B cell (primary cell): ENCODE measurements at regions of chr12 and their contacts with region 1.

Region 1: DNA sequence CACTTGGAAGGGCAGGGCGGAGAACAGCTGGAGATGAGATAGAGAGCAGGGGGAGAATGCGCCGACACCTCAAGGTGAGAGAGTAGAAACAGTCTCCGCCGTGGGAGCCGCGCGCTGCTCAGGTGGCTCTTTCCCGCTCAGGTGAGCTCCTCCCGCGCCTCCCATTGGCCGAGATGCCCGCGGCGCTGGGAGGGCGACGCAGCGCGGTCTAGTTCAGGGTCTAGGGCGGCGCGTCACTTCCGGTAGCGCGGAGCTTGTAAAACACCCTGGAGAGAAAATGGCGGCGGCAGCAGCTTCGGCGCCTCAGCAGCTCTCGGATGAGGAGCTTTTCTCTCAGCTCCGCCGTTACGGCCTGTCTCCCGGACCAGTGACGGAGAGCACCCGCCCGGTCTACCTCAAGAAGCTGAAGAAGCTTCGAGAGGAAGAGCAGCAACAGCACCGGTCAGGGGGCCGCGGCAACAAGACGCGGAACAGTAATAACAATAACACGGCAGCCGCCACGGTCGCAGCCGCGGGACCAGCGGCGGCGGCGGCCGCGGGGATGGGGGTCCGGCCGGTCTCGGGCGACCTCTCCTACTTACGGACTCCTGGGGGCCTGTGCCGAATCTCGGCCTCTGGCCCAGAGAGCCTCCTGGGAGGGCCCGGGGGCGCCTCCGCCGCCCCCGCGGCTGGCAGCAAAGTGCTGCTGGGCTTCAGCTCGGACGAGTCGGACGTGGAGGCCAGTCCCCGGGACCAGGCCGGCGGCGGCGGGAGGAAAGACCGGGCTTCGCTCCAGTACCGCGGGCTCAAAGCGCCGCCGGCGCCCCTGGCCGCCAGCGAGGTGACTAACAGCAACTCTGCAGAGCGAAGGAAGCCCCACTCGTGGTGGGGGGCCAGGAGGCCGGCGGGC is at the start of gene LEMD3:
- DNase-seq: peak; percentile 97
- ATAC-seq: peak; percentile 95
- H3K4me3 ChIP-seq: peak within 1 kb of the TSS; percentile 76 to 98 (median 94)
- H3K4me3 Mint-ChIP-seq: peak within 1 kb of the TSS; percentile 95
- H3K27ac ChIP-seq: peak within 1 kb of the TSS; percentile 82 to 98
- H3K27ac Mint-ChIP-seq: peak within 1 kb of the TSS; percentile 99
- H3K4me1 ChIP-seq: peaks cover 35 to 37% of the 10 kb centered on the region in 2 donors
- H3K4me1 Mint-ChIP-seq: peaks cover 38% of the 10 kb centered on the region
- H3K27me3 ChIP-seq: no peaks in the 10 kb centered on the region
- H3K27me3 Mint-ChIP-seq: no peaks in the 10 kb centered on the region
- CTCF ChIP-seq: peak; percentile 15
- total RNA-seq, gene LEMD3: 65.7 and 71.8 TPM in 2 replicates

Region 2: GRCh38 chr12:64222009-64222765 is 947.4 kb before region 1 on chr12 and contains the start of gene KICS2:
- CTCF ChIA-PET with region 1: no interaction called
- POLR2A ChIA-PET with region 1: no interaction called
- intact Hi-C with region 1: loop called (anchors 5 kb)
- DNase-seq: peak; percentile 98
- ATAC-seq: peak; percentile 86
- H3K4me3 ChIP-seq: peak within 1 kb of the TSS; percentile 58 to 89 (median 80)
- H3K4me3 Mint-ChIP-seq: peak within 1 kb of the TSS; percentile 93
- H3K27ac ChIP-seq: peak within 1 kb of the TSS; percentile 92 to 97
- H3K27ac Mint-ChIP-seq: peak within 1 kb of the TSS; percentile 96
- H3K4me1 ChIP-seq: peaks cover 10 to 20% of the 10 kb centered on the region in 2 donors
- H3K4me1 Mint-ChIP-seq: peaks cover 31% of the 10 kb centered on the region
- H3K27me3 ChIP-seq: peaks cover 0 to 3% (median 0%) of the 10 kb centered on the region in 4 experiments
- H3K27me3 Mint-ChIP-seq: peaks cover 8% of the 10 kb centered on the region
- CTCF ChIP-seq: no peak
- total RNA-seq, gene KICS2: 18.7 and 21.2 TPM in 2 replicates

Region 3: DNA sequence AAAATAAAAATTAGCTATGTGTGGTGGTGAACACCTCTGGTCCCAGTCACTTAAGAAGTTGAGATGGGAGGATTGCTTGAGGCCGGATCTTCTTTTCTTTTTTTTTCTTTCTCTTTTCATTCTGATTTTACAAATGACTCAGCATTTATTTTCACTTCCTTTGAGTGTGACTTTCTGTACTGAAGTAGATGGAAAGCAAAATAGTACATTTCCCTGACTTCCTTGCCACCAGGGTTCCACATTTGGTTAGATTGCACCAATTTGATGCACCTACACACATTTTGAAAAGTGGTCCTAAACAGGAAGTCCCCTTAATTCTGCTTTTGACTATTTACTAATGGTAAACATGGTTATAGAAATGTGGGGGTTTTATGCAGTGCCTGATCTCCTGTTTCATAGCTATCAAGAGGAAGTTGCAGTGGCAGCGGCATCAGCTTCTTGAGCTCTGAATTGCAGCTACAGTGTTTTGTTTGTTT is 13.2 kb before region 1 on chr12:
- CTCF ChIA-PET with region 1: interaction called, 10 read pairs
- POLR2A ChIA-PET with region 1: interaction called, 4 read pairs
- intact Hi-C with region 1: loop called (anchors 2 kb)
- DNase-seq: peak; percentile 53
- ATAC-seq: peak; percentile 64
- H3K4me3 ChIP-seq: peak overlapping the region in 4 of 5 experiments; percentile 10 to 30 (median 19)
- H3K4me3 Mint-ChIP-seq: peak overlapping the region; percentile 14
- H3K27ac ChIP-seq: peak overlapping the region; percentile 4 to 53
- H3K27ac Mint-ChIP-seq: peak overlapping the region; percentile 47
- H3K4me1 ChIP-seq: peaks cover 11 to 16% of the 10 kb centered on the region in 2 donors
- H3K4me1 Mint-ChIP-seq: peaks cover 14% of the 10 kb centered on the region
- H3K27me3 ChIP-seq: peaks cover 0 to under 1% (median 0%) of the 10 kb centered on the region in 4 experiments
- H3K27me3 Mint-ChIP-seq: peaks cover 11% of the 10 kb centered on the region
- CTCF ChIP-seq: no peak

Region 4: GRCh38 chr12:65232476-65233077 is 63.0 kb after region 1 on chr12:
- CTCF ChIA-PET with region 1: interaction called, 12 read pairs
- POLR2A ChIA-PET with region 1: interaction called, 3 read pairs
- intact Hi-C with region 1: no loop called
- DNase-seq: peak; percentile 49
- ATAC-seq: no peak
- H3K4me3 ChIP-seq: no peak overlapping the region
- H3K4me3 Mint-ChIP-seq: no peak overlapping the region
- H3K27ac ChIP-seq: peak overlapping the region in 1 of 2 donors; percentile 37
- H3K27ac Mint-ChIP-seq: no peak overlapping the region
- H3K4me1 ChIP-seq: peaks cover 0 to 2% of the 10 kb centered on the region in 2 donors
- H3K4me1 Mint-ChIP-seq: peaks cover 8% of the 10 kb centered on the region
- H3K27me3 ChIP-seq: no peaks in the 10 kb centered on the region
- H3K27me3 Mint-ChIP-seq: no peaks in the 10 kb centered on the region
- CTCF ChIP-seq: peak; percentile 86

Region 5: GRCh38 chr12:66235626-66236281 is 1066.2 kb after region 1 on chr12:
- CTCF ChIA-PET with region 1: no interaction called
- POLR2A ChIA-PET with region 1: no interaction called
- intact Hi-C with region 1: loop called (anchors 5 kb)
- DNase-seq: peak; percentile 34
- ATAC-seq: no peak
- H3K4me3 ChIP-seq: peak overlapping the region; percentile 36 to 76 (median 64)
- H3K4me3 Mint-ChIP-seq: peak overlapping the region; percentile 71
- H3K27ac ChIP-seq: no peak overlapping the region
- H3K27ac Mint-ChIP-seq: no peak overlapping the region
- H3K4me1 ChIP-seq: peaks cover 10 to 23% of the 10 kb centered on the region in 2 donors
- H3K4me1 Mint-ChIP-seq: peaks cover 33% of the 10 kb centered on the region
- H3K27me3 ChIP-seq: no peaks in the 10 kb centered on the region
- H3K27me3 Mint-ChIP-seq: no peaks in the 10 kb centered on the region
- CTCF ChIP-seq: peak; percentile 55